Activated CD4-positive, alpha-beta memory T cell treated with anti-CD3 and anti-CD28 coated beads for 36 hours (primary cell): ENCODE measurements at regions of chr4 and their contacts with region 1.

Region 1: GRCh38 chr4:118772081-118772766 is 63.7 kb downstream of the SEC24D start:
- DNase-seq: no peak
- H3K4me3 Mint-ChIP-seq: no peak overlapping the region
- H3K27ac Mint-ChIP-seq: no peak overlapping the region
- H3K4me1 Mint-ChIP-seq: no peaks in the 10 kb centered on the region
- H3K27me3 Mint-ChIP-seq: no peaks in the 10 kb centered on the region

Region 2: DNA sequence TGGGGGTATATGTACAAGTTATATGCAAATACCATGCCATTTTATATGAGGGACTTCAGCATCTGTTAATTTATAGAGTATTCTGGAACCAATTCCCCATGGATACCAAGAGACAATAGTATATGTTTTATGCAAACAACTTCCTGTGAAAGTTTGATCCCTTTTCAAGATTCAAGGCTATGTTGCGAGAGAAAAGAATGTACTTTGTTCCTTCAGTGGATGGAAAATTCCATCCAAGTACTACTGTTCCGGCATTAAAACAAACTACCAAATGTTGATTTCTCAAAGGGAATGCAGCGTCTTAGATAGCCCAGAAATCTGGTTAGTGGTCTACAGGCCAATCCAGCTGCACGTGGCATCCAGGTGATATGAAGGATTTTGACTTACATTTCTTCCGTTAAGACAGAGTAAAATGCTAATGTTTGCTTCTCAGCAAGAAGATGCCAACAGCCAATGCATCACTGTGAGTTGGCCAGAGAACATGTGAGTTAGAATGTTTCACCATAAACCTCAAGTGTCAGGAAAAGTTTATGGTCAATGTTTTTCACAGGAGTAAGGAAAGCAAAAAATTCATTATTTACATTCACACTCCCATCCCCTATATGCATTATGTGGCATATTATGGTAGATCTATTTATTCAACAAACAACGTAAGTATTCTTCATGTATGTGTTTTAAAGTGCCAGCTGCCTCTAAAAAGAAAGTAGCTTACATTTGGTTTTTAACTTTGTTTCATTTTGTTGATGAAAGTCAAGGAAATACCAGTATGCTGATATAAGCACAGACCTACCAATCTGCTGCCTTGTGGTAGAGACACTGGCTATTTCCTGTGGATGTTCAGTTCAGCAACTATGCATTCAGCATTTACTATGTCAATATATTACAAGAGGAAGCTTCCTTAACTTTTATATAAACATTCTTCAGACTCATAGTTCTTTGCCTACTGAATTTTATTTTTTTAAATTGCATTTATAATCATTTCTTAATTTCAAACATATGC is 42.6 kb before region 1 on chr4:
- CTCF ChIA-PET with region 1: no interaction called
- POLR2A ChIA-PET with region 1: no interaction called
- intact Hi-C with region 1: no loop called
- DNase-seq: no peak
- H3K4me3 Mint-ChIP-seq: no peak overlapping the region
- H3K27ac Mint-ChIP-seq: no peak overlapping the region
- H3K4me1 Mint-ChIP-seq: peaks cover 8% of the 10 kb centered on the region
- H3K27me3 Mint-ChIP-seq: no peaks in the 10 kb centered on the region

Region 3: DNA sequence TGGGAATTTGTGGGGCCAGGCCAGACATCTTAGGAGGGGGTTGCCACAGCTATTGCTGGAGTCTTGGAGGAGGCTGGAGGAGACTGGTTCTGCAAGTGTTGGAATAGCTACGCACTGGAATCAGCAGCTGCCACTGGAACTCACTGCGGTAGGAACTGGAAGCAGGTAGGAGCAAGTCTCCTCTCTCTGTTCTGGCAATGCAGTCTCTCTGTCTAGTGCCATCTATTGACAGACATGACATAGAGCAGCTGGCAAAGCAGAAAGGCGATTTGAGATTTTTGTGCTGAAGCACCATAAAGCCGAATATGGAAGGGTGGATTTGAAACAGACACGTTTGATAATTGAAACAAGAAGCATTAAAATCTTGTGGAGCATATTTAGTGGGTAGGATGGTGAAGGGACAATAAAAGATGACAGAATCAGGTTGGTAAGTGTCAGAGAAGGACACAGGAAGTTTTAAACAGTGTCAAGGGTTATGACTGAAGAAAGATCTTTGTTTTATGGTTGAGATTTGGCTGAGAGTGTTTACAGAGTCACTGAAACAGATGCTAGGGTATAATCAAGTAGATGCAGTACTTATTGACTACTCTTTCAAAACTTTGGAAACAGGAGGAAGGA is 93.0 kb after region 1 on chr4:
- CTCF ChIA-PET with region 1: interaction called, 27 read pairs
- POLR2A ChIA-PET with region 1: no interaction called
- intact Hi-C with region 1: loop called (anchors 1 kb)
- DNase-seq: peak; percentile 12
- H3K4me3 Mint-ChIP-seq: no peak overlapping the region
- H3K27ac Mint-ChIP-seq: no peak overlapping the region
- H3K4me1 Mint-ChIP-seq: no peaks in the 10 kb centered on the region
- H3K27me3 Mint-ChIP-seq: no peaks in the 10 kb centered on the region

Region 4: GRCh38 chr4:118888666-118889311 is 116.6 kb after region 1 on chr4 and contains the start of gene SYNPO2:
- CTCF ChIA-PET with region 1: interaction called, 97 read pairs
- POLR2A ChIA-PET with region 1: no interaction called
- intact Hi-C with region 1: loop called (anchors 1 kb)
- DNase-seq: peak; percentile 54
- H3K4me3 Mint-ChIP-seq: peak within 1 kb of the TSS; percentile 71
- H3K27ac Mint-ChIP-seq: no peak within 1 kb of the TSS
- H3K4me1 Mint-ChIP-seq: peaks cover 14% of the 10 kb centered on the region
- H3K27me3 Mint-ChIP-seq: peaks cover 21% of the 10 kb centered on the region
- total RNA-seq, gene SYNPO2: 0.12 to 0.19 TPM

Region 5: GRCh38 chr4:118968005-118968404 is 195.8 kb after region 1 on chr4:
- CTCF ChIA-PET with region 1: interaction called, 4 read pairs
- POLR2A ChIA-PET with region 1: no interaction called
- intact Hi-C with region 1: loop called (anchors 1 kb)
- DNase-seq: peak; percentile 11
- H3K4me3 Mint-ChIP-seq: no peak overlapping the region
- H3K27ac Mint-ChIP-seq: no peak overlapping the region
- H3K4me1 Mint-ChIP-seq: peaks cover 8% of the 10 kb centered on the region
- H3K27me3 Mint-ChIP-seq: no peaks in the 10 kb centered on the region